HEK293 (cell line): ENCODE measurements at regions of chr5 and their contacts with region 1.

Region 1: GRCh38 chr5:173972925-173973615 is 15.9 kb upstream of the C5orf47 start:
- H3K4me3 ChIP-seq: peak overlapping the region; percentile 44
- H3K27ac ChIP-seq: no peak overlapping the region; the same call in 1 of the 2 replicates
- H3K4me1 ChIP-seq: no peaks in the 10 kb centered on the region
- CTCF ChIP-seq: peak; percentile 81

Region 2: DNA sequence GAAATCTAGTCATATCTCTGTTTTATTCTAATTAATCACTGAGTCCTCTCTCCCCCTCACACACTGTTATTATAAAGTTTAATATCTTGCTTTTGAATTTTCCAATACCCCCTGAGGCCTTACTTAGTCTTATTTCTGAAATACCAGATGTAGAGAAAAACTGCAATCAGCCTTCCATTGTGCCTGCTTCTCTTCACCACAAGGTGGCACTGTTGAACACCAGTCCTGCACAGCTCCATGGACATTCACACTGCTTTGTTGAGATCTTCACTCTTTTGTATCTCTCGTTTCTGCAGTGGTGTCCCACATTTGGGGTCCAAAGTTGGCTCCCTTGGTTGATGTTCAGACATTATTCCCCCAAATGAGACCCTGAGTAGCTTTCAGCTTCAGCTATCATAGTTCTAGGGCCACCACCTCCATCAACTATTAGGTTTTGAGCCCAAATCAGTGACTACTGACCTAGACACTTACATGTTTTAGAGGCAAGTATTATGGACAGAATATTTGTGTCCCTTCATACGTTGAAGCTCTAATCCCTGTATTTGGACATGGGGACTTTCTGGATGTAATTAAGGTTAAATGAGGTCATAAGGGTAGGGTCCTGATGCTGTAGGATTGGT is 380.9 kb before region 1 on chr5:
- CTCF ChIA-PET with region 1: interaction called, 10 read pairs
- POLR2A ChIA-PET with region 1: no interaction called
- H3K4me3 ChIP-seq: no peak overlapping the region
- H3K27ac ChIP-seq: no peak overlapping the region
- H3K4me1 ChIP-seq: no peaks in the 10 kb centered on the region
- CTCF ChIP-seq: no peak

Region 3: DNA sequence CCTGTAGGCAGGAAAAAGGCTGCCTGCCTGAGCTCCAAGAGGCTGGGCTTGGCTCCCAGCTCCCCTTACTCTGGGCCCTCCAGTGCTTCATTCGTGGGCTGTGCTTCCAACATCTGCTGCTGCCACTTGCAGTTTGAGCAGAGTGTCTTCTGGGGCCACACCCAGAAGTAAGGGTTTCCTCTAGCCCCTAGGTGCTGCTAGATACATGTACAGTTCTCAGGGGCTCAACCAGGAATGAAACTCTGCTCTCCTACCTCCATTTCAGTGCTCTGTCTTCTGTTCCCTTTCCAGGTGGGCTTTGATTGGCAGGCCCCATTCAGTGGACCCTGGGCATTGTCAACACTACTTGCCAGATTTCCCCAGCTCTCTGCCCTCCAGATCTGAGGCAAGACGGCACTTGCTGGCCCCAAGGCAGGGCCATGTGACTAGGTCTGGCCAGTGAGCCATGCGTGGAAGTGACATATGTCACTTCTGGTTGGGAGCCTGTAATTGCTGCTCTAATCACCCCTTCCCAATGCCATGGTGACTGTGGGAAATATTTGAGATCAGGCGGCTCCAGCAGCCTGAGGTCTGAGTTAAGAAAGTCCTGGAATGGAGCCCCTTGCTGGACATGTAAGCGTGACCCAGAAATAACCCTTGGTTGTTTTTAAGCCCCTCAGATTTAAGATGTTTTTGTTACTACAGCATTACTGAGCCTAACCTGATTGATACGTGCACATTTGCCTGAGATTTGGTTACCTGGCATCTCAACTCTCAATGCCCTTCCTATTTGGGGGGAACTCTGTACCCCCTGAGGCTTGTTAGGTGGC is 347.2 kb before region 1 on chr5:
- CTCF ChIA-PET with region 1: interaction called, 94 read pairs
- POLR2A ChIA-PET with region 1: interaction called, 5 read pairs
- H3K4me3 ChIP-seq: no peak overlapping the region
- H3K27ac ChIP-seq: no peak overlapping the region
- H3K4me1 ChIP-seq: no peaks in the 10 kb centered on the region
- CTCF ChIP-seq: peak; percentile 41

Region 4: GRCh38 chr5:173633304-173633703 is 339.8 kb before region 1 on chr5:
- CTCF ChIA-PET with region 1: interaction called, 19 read pairs
- POLR2A ChIA-PET with region 1: interaction called, 5 read pairs
- H3K4me3 ChIP-seq: no peak overlapping the region
- H3K27ac ChIP-seq: no peak overlapping the region
- H3K4me1 ChIP-seq: no peaks in the 10 kb centered on the region
- CTCF ChIP-seq: no peak

Region 5: DNA sequence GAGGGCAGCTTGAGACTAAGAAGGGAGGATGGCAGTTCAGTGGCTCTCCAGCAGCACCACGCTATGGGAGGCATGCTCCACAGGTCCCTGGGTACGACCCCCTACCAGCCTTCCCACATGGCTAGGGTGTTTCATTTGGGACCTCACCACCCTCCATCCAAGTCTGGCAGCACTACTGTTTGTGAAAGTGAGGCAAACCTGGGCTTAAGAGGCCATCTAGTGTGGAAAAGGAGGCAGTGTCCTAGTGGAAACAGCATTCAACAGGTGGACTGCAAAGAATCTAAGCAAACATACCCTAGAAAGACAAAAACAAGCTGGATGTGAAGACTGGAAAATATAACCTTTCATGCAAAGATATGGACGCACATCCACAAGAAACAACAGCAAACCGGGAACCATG is 11.1 kb after region 1 on chr5:
- CTCF ChIA-PET with region 1: interaction called, 28 read pairs
- POLR2A ChIA-PET with region 1: no interaction called
- H3K4me3 ChIP-seq: no peak overlapping the region
- H3K27ac ChIP-seq: no peak overlapping the region
- H3K4me1 ChIP-seq: no peaks in the 10 kb centered on the region
- CTCF ChIP-seq: peak; percentile 51; the same call in 1 of the 2 replicates

Region 6: DNA sequence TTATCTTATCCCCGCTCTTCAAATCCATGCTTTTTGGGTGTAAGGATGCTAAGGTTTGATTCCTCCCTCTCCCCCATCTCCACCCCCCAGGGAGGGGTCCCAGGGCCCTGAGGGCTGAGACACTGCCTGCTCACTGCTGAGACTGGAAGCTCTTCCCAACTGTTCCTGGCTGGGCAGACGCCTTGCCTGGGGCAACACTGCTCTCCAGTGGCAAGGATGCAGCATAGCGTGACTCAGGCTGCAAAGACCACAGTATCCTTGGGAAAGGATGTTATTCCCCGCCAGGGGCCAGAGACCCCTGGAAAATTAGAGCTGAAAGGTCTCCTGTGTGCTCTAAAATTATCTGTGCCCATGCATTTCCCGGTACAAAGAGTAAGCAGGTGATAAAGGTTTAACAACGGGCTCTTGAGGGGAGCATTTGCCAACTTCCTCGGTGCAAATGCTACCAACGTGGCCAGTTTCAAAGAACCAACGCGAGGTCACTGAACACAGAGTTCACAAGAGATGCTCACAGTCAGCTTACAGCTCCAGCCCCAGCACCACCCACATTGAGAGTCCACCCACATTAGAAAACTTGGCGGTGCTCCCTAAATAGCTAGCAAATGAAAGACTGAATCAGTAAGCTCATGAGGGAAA is 344.3 kb after region 1 on chr5:
- CTCF ChIA-PET with region 1: interaction called, 13 read pairs
- POLR2A ChIA-PET with region 1: no interaction called
- H3K4me3 ChIP-seq: no peak overlapping the region
- H3K27ac ChIP-seq: no peak overlapping the region
- H3K4me1 ChIP-seq: no peaks in the 10 kb centered on the region
- CTCF ChIP-seq: peak; percentile 92